HEK293T (cell line): ENCODE measurements at regions of chr13 and their contacts with region 1.

Region 1: GRCh38 chr13:25375727-25376358 is 4.1 kb downstream of the ATP8A2 start:
- DNase-seq: peak; percentile 48

Region 2: GRCh38 chr13:23473221-23473620 is 1902.6 kb before region 1 on chr13:
- CTCF ChIA-PET with region 1: interaction called, 10 read pairs
- POLR2A ChIA-PET with region 1: no interaction called
- DNase-seq: no peak

Region 3: DNA sequence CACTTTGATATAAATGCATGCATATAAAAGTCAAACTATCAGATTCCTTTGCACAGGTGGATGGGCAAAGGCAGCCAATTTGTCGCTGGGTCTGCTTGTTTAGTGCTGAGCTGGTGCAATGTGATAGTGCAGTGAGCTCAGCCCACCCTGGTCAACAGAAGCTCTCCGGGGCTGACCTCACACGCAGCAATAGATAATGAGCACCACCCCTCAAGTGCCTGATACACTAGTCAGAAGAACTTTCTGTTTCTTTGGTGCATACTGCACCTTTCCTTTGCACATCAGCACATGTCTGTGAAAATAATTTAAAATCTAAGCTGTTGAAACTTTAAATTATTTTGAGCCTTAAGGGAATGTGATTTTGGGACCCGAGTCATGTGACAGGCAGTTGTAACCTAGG is 16.1 kb after region 1 on chr13:
- CTCF ChIA-PET with region 1: interaction called, 11 read pairs
- POLR2A ChIA-PET with region 1: interaction called, 3 read pairs
- DNase-seq: no peak

Region 4: GRCh38 chr13:25585000-25585399 is 209.2 kb after region 1 on chr13:
- CTCF ChIA-PET with region 1: no interaction called
- POLR2A ChIA-PET with region 1: no interaction called
- DNase-seq: no peak